ENCODE measurements at regions of chr11 and their contacts with region 1.

Region 1: DNA sequence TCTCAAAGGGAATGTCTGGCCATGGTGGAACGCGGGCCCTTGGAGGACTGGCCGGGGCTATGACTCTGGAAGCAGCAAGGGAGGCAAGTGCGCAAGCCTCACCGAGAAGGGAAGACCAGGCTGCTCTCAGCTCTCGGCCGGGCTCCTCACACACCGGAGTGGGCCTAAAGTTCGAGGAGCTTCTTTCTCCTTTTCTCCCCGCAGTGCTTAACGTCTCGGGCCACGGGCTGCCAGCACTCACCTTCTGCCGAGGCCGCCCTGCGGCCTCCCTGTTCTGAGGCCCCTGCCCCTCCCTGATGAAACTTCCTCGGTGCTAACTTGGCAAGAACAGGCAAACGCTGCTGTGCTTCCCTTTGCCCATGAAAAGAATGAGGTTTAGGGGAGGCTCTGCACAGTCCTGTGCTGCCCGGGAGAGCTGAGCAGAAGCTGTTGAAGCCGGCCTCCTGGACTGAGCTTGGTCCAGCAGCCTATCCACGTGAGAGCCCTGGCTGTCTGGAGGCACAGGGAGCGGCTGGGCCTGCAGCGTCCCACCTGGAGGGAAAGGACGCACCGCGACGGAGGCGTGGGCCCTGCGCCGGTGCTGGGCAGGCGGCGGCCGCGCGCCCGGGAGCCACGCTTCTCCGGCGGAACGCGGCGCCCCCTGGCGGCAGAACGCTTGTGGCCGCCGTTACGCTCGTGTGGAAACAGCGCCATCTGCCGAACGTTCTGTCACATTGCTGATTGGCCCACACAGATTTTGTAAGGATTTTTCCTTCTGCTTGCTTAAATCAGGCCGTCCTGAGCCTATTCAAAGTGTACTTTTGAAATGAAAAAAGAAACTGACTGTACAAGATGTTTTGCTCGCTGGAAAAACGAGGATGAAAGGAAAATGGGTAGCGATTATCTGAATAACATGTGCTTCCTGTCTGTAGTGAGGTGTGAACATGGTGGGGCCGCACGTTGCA is 65.0 kb upstream of the TMEM45B start:
- DNase-seq: peak; percentile 75
- ATAC-seq: peak; percentile 93
- H3K4me3 Mint-ChIP-seq: no peak overlapping the region
- H3K27ac Mint-ChIP-seq: no peak overlapping the region
- H3K4me1 Mint-ChIP-seq: peaks cover 2% of the 10 kb centered on the region
- H3K27me3 Mint-ChIP-seq: peaks cover 5% of the 10 kb centered on the region
- CTCF ChIP-seq: peak; percentile 99

Region 2: GRCh38 chr11:129364143-129364654 is 386.4 kb before region 1 on chr11:
- CTCF ChIA-PET with region 1: interaction called, 12 read pairs
- POLR2A ChIA-PET with region 1: no interaction called
- intact Hi-C with region 1: loop called (anchors 2 kb)
- DNase-seq: peak; percentile 85
- ATAC-seq: peak; percentile 100
- H3K4me3 Mint-ChIP-seq: no peak overlapping the region
- H3K27ac Mint-ChIP-seq: no peak overlapping the region
- H3K4me1 Mint-ChIP-seq: no peaks in the 10 kb centered on the region
- H3K27me3 Mint-ChIP-seq: peaks cover 31% of the 10 kb centered on the region
- CTCF ChIP-seq: peak; percentile 99

Region 3: GRCh38 chr11:129375751-129376657 is 374.6 kb before region 1 on chr11 and contains the start of gene BARX2:
- CTCF ChIA-PET with region 1: interaction called, 11 read pairs
- POLR2A ChIA-PET with region 1: no interaction called
- intact Hi-C with region 1: no loop called
- DNase-seq: peak; percentile 53
- ATAC-seq: peak; percentile 65
- H3K4me3 Mint-ChIP-seq: peak within 1 kb of the TSS; percentile 54
- H3K27ac Mint-ChIP-seq: no peak within 1 kb of the TSS
- H3K4me1 Mint-ChIP-seq: peaks cover 25% of the 10 kb centered on the region
- H3K27me3 Mint-ChIP-seq: peaks cover 68% of the 10 kb centered on the region
- CTCF ChIP-seq: no peak
- total RNA-seq, gene BARX2: not detected

Region 4: DNA sequence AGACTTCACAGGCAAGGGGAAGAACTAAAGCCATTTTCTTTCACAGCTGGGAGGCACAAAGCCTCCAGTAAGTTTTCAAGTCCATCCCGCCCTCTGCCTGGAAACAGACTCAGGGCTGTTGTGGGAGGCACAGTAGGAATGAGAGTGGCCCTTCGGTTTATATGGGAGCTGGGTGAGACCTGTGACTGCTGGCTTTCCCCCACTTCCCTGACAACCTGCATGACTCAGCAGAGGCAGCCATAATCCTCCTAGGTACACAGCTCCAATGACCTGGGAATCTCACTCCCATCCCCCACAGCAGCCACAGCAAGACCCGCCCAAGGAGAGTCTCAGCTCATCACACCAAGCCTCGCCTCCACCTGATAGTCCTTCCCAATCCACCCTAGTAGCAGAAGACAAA is 52.9 kb after region 1 on chr11:
- CTCF ChIA-PET with region 1: no interaction called
- POLR2A ChIA-PET with region 1: no interaction called
- intact Hi-C with region 1: no loop called
- DNase-seq: no peak
- ATAC-seq: no peak
- H3K4me3 Mint-ChIP-seq: no peak overlapping the region
- H3K27ac Mint-ChIP-seq: no peak overlapping the region
- H3K4me1 Mint-ChIP-seq: peaks cover 18% of the 10 kb centered on the region
- H3K27me3 Mint-ChIP-seq: peaks cover 5% of the 10 kb centered on the region
- CTCF ChIP-seq: no peak

Region 5: DNA sequence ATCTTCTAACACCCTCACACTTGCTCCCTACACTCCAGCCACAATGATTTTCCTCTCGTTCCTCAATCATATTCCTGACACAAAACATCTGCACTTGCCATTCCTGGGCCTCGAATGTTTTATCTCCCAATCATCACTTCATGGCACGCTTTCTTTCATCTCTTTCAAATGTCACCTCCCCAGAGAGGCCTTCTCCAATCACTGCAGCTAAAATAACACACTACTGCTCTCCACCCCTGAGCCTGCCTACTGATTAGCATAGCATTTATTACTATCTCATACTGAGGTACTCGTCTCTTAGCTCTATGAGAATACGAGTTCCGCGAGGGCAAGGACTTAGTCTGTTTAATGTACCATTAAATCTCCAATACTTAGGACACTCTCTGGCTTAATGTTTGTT is 121.3 kb after region 1 on chr11:
- CTCF ChIA-PET with region 1: no interaction called
- POLR2A ChIA-PET with region 1: no interaction called
- intact Hi-C with region 1: no loop called
- DNase-seq: no peak
- ATAC-seq: no peak
- H3K4me3 Mint-ChIP-seq: no peak overlapping the region
- H3K27ac Mint-ChIP-seq: no peak overlapping the region
- H3K4me1 Mint-ChIP-seq: peaks cover 3% of the 10 kb centered on the region
- H3K27me3 Mint-ChIP-seq: no peaks in the 10 kb centered on the region
- CTCF ChIP-seq: no peak

Region 6: DNA sequence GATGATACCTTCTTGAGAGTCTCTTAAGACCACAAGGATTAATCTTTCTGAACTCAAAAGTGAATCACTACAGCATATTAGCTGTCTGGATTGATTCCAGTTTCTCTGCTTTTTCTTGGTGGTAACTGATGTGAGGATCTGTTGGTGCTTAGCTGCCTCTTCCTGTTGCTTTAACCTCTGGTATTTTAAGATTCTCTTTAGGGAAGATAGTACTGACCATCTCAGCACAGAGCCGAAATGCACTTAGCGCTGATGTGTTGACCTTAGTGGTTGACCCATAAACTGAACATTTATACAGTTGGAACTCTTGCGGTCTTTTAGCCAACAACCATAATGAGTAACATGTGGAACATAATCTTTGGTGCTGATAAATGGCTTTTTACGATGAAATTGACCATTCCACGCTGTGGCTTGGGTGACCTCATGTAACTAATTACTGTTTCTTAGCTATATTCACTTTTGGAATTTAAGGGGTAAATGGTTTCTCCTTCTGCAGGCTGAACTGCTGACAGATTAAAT is 352.7 kb after region 1 on chr11:
- CTCF ChIA-PET with region 1: no interaction called
- POLR2A ChIA-PET with region 1: no interaction called
- intact Hi-C with region 1: no loop called
- DNase-seq: no peak
- ATAC-seq: no peak
- H3K4me3 Mint-ChIP-seq: no peak overlapping the region
- H3K27ac Mint-ChIP-seq: no peak overlapping the region
- H3K4me1 Mint-ChIP-seq: no peaks in the 10 kb centered on the region
- H3K27me3 Mint-ChIP-seq: no peaks in the 10 kb centered on the region
- CTCF ChIP-seq: no peak